ENCODE measurements at regions of chr11 and their contacts with region 1.

Region 1: GRCh38 chr11:3021125-3021524 is 29.0 kb upstream of the NAP1L4 start:
- DNase-seq: peak; percentile 62
- H3K4me3 Mint-ChIP-seq: no peak overlapping the region
- H3K27ac Mint-ChIP-seq: no peak overlapping the region
- H3K4me1 Mint-ChIP-seq: peaks cover 20% of the 10 kb centered on the region
- H3K27me3 Mint-ChIP-seq: no peaks in the 10 kb centered on the region
- CTCF ChIP-seq: peak; percentile 29

Region 2: GRCh38 chr11:2305140-2305840 is 715.8 kb before region 1 on chr11:
- CTCF ChIA-PET with region 1: no interaction called
- POLR2A ChIA-PET with region 1: no interaction called
- intact Hi-C with region 1: no loop called
- DNase-seq: peak; percentile 67
- H3K4me3 Mint-ChIP-seq: no peak overlapping the region
- H3K27ac Mint-ChIP-seq: no peak overlapping the region
- H3K4me1 Mint-ChIP-seq: peaks cover 7% of the 10 kb centered on the region
- H3K27me3 Mint-ChIP-seq: no peaks in the 10 kb centered on the region
- CTCF ChIP-seq: peak; percentile 77

Region 3: DNA sequence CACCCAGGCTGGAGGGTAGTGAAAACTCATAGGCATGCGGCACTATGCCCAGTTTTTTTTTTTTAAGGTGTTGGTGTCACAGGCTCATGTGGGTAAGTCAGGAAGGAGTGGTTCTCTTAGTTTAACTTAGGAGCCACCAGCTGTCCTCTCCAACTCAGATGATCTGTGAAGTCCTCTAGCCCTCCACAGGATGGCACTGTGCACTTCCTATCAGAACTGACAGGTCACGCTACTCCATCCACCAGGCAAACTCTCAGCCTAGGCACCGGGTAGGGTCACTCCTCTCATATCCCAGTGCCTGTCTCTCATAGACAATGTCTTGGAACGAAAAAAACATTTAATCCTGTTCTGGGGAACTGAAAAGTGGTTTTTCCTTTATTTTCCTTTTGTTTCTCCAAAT is 45.5 kb before region 1 on chr11:
- CTCF ChIA-PET with region 1: interaction called, 40 read pairs
- POLR2A ChIA-PET with region 1: interaction called, 4 read pairs
- intact Hi-C with region 1: no loop called
- DNase-seq: peak; percentile 62
- H3K4me3 Mint-ChIP-seq: no peak overlapping the region
- H3K27ac Mint-ChIP-seq: no peak overlapping the region
- H3K4me1 Mint-ChIP-seq: peaks cover 6% of the 10 kb centered on the region
- H3K27me3 Mint-ChIP-seq: no peaks in the 10 kb centered on the region
- CTCF ChIP-seq: peak; percentile 50

Region 4: GRCh38 chr11:2992234-2992996 is 28.7 kb before region 1 on chr11 and contains the start of gene NAP1L4:
- CTCF ChIA-PET with region 1: interaction called, 16 read pairs
- POLR2A ChIA-PET with region 1: interaction called, 10 read pairs
- intact Hi-C with region 1: no loop called
- DNase-seq: peak; percentile 97
- H3K4me3 Mint-ChIP-seq: peak within 1 kb of the TSS; percentile 96
- H3K27ac Mint-ChIP-seq: peak within 1 kb of the TSS; percentile 99
- H3K4me1 Mint-ChIP-seq: peaks cover 21% of the 10 kb centered on the region
- H3K27me3 Mint-ChIP-seq: no peaks in the 10 kb centered on the region
- CTCF ChIP-seq: no peak
- total RNA-seq, gene NAP1L4: 103 TPM in 2 replicates

Region 5: DNA sequence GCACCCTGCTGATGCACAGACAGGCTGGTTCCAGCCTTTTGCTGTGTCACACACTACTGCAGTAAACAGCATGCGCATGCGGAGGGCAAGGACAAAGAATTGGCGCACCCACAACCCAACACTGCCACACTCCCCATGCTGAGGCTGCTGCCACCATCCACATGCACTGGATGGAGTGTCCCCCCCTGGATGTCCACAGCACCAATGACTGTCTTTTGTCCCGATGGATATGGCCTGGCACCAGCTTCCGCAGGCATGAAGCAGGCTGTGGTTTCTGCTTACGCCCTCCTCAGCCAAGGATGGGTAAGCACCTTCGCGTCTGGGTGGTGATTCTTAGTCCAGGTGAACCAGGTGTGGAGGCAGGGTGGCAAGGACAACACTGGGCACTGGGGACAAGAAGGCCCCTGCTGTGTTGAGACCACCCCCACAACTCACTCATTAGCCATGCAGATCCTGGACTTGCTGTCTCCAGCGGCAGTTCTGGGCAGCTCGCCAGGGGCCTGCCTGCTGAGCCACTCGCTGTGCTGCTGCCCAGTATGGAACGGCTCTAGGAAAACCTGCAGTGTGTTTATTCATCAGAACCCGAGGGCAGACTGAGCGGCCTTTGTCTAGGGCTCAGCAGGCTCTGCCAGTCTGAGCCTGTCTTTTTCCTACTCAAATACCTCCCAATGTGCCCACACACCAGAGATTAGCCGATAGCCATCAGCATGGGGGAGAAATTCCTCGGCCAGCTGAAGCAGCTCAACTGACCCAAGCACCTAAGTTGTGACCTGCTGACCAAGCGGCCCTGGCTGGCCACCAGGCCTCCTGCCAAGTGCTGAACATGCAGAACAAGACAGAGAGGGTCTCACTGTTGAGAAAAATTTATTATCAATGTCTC is 20.8 kb before region 1 on chr11:
- CTCF ChIA-PET with region 1: interaction called, 10 read pairs
- POLR2A ChIA-PET with region 1: interaction called, 47 read pairs
- intact Hi-C with region 1: no loop called
- DNase-seq: peak; percentile 90
- H3K4me3 Mint-ChIP-seq: no peak overlapping the region
- H3K27ac Mint-ChIP-seq: peak overlapping the region; percentile 52
- H3K4me1 Mint-ChIP-seq: peaks cover 42% of the 10 kb centered on the region
- H3K27me3 Mint-ChIP-seq: no peaks in the 10 kb centered on the region
- CTCF ChIP-seq: no peak

Region 6: GRCh38 chr11:3195251-3196160 is 174.4 kb after region 1 on chr11:
- CTCF ChIA-PET with region 1: no interaction called
- POLR2A ChIA-PET with region 1: no interaction called
- intact Hi-C with region 1: no loop called
- DNase-seq: peak; percentile 52
- H3K4me3 Mint-ChIP-seq: no peak overlapping the region
- H3K27ac Mint-ChIP-seq: no peak overlapping the region
- H3K4me1 Mint-ChIP-seq: no peaks in the 10 kb centered on the region
- H3K27me3 Mint-ChIP-seq: peaks cover 11% of the 10 kb centered on the region
- CTCF ChIP-seq: peak; percentile 42

Region 7: GRCh38 chr11:3207526-3208189 is 186.5 kb after region 1 on chr11:
- CTCF ChIA-PET with region 1: no interaction called
- POLR2A ChIA-PET with region 1: no interaction called
- intact Hi-C with region 1: no loop called
- DNase-seq: no peak
- H3K4me3 Mint-ChIP-seq: no peak overlapping the region
- H3K27ac Mint-ChIP-seq: no peak overlapping the region
- H3K4me1 Mint-ChIP-seq: no peaks in the 10 kb centered on the region
- H3K27me3 Mint-ChIP-seq: peaks cover 16% of the 10 kb centered on the region
- CTCF ChIP-seq: no peak

Measured in MCF 10A (cell line).